ENCODE measurements at regions of chr9 and their contacts with region 1.

Region 1: DNA sequence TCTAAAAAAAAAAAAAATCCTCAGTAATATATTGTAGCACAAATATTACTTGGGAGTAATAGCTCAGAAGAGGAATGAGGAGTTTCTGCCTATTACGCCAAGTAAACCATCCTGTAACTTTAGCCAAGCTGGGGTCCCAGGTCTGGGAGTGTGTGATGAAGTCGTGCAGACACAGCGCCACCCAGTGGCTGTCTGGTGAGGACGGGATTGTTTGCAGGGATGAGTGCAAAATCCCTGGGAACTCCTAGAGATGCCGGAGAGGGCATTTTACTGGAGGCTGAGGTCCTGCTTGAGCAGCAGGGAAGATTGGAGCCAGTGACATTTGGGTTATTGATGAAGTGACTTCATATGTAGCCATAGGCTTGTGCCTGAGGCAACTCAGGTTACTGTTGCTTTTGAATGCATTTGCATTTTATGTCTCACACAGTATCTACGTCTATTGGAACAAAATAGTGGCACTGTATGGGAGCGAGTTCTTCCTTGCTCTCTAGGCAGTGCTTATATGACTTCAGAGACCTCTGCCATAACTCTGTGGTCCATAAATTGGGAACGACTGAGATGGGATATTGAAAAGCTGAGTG is 72.8 kb downstream of the PSAT1 start:
- DNase-seq: peak; percentile 57
- H3K4me3 ChIP-seq: no peak overlapping the region
- H3K27ac ChIP-seq: no peak overlapping the region
- H3K4me1 ChIP-seq: peaks cover 6% of the 10 kb centered on the region
- H3K27me3 ChIP-seq: no peaks in the 10 kb centered on the region
- CTCF ChIP-seq: peak; percentile 63 to 72 (median 64)
- POLR2A ChIP-seq: no peak

Region 2: DNA sequence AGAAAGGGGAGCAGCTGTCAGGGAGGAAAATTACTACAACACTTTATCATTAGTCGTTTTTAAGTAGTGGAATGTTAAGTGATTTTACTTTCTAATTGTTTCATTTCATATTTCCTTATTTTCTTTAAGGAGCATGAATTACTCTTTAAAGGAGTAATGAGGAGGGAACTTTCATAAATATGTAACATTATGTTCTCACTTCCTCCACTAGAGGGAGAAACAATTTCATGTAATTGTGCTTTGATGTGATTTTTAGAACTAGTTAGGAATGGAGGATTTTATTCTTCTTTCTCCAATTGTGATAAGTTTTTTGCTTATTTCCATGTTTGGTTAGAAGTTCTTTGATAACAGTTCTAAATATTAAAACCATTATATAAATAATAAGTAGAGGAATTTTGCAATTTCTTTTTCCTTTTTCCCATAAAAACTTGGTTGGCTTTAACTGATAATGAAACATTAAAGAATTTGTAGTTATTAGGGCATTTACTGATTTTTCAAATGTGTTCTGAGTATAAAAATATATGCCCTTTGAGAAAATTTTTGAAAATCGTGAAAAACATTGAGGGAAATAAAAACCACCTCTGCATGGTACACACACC is 108.2 kb before region 1 on chr9:
- intact Hi-C with region 1: loop called (anchors 5 kb)
- DNase-seq: no peak
- H3K4me3 ChIP-seq: no peak overlapping the region
- H3K27ac ChIP-seq: no peak overlapping the region
- H3K4me1 ChIP-seq: no peaks in the 10 kb centered on the region
- H3K27me3 ChIP-seq: no peaks in the 10 kb centered on the region
- CTCF ChIP-seq: peak; percentile 26 to 68 (median 59)
- POLR2A ChIP-seq: no peak

Region 3: GRCh38 chr9:78348848-78349247 is 20.9 kb before region 1 on chr9:
- intact Hi-C with region 1: no loop called
- DNase-seq: no peak
- H3K4me3 ChIP-seq: no peak overlapping the region
- H3K27ac ChIP-seq: no peak overlapping the region
- H3K4me1 ChIP-seq: no peaks in the 10 kb centered on the region
- H3K27me3 ChIP-seq: no peaks in the 10 kb centered on the region
- CTCF ChIP-seq: no peak
- POLR2A ChIP-seq: no peak

Region 4: GRCh38 chr9:78439190-78439865 is 69.6 kb after region 1 on chr9:
- intact Hi-C with region 1: no loop called
- DNase-seq: peak; percentile 82
- H3K4me3 ChIP-seq: no peak overlapping the region
- H3K27ac ChIP-seq: no peak overlapping the region
- H3K4me1 ChIP-seq: no peaks in the 10 kb centered on the region
- H3K27me3 ChIP-seq: no peaks in the 10 kb centered on the region
- CTCF ChIP-seq: peak; percentile 77 to 88 (median 80)
- POLR2A ChIP-seq: no peak